ENCODE measurements at regions of chr13 and their contacts with region 1.

Region 1: DNA sequence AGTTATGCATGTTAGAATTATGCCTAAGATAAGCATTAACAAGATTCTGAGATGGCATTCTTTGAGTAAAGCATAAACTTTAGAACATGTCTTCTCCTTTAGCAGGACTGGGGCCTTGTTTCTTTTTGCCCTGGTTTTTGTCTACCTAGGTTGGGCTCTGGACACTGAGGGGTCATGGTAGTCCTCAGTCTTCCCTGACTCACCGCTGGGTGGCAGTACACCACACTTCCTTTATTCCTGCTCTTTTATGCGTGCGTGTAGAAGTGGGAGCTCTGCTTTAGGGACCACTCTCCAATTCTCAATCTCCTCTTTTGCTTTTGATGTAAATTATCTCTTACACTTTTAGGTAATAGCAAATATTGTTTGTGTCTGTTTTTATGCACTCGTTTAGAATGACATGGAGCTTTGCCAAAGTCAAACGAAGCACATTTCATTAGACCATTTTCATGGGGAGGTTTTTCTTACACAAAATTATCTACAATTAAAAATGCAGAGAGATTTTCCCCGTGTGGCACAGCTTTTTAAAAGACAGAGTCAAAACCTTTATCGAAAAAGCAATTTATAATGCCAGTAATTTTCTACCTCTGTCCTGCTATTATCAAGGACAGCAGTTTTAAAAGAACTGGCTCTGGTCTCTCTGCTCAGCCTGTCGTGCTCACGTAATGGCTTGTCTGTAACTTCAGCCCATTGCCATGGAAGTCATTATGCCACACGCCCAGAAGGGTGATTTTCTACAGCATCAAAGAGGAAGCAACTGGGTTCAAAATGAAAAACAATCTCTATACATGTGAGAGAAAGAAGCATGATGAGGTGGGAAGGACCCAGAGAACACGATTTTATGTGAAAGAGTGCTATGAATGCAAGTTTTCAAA is 413.9 kb downstream of the COG6 start:
- DNase-seq: no peak
- ATAC-seq: peak; percentile 92
- H3K4me3 ChIP-seq: no peak overlapping the region
- H3K27ac ChIP-seq: no peak overlapping the region
- H3K4me1 ChIP-seq: no peaks in the 10 kb centered on the region
- H3K27me3 ChIP-seq: peaks cover 0 to 8% of the 10 kb centered on the region in 2 experiments; a peak in 1 of 4 replicates
- CTCF ChIP-seq: peak; percentile 76 to 81 (median 79)
- EP300 ChIP-seq: no peak
- POLR2A ChIP-seq: no peak
- RAD21 ChIP-seq: peak; percentile 82

Region 2: GRCh38 chr13:38862443-38862842 is 1207.0 kb before region 1 on chr13:
- CTCF ChIA-PET with region 1: no interaction called
- POLR2A ChIA-PET with region 1: no interaction called
- RAD21 ChIA-PET with region 1: no interaction called
- SMC1A ChIA-PET with region 1: no interaction called
- in situ Hi-C with region 1: no loop called
- intact Hi-C with region 1: no loop called
- DNase-seq: no peak
- ATAC-seq: peak; percentile 78
- H3K4me3 ChIP-seq: no peak overlapping the region
- H3K27ac ChIP-seq: no peak overlapping the region
- H3K4me1 ChIP-seq: no peaks in the 10 kb centered on the region
- H3K27me3 ChIP-seq: no peaks in the 10 kb centered on the region; a peak in 1 of 4 replicates
- CTCF ChIP-seq: no peak
- EP300 ChIP-seq: no peak
- POLR2A ChIP-seq: no peak
- RAD21 ChIP-seq: no peak

Region 3: DNA sequence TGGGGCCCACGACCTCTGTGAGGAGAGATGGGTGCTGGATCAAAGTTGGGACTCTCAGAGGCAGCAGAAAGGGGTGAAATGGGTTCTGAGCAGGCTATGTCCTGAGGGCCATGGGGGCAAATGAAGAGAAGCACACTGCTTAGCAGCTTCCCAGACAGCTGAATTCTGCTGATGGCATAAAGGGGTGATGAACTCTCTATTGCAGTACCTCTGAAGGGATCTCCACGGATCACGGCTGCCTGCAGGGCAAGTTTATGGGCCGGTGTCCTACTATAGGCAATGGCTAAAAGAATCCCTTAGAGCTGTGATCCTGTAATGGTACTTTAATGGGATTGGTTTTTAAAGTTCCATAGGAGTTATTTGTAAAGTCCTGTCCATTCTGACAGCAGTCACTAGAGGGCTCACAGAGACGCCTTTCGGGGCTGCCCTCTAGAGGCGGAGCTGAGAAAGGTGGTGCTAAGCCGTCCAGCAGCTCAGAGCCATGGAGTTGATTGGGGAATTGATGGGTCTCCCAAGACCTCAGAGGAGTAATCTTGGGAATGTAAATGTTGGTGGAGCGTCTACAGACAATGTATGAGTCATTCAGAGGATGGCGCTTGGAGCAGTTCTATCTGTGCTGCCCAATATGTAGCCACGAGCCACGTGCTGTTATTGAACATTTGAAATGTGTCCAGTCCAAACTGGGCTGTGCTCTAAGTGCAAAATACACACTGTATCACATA is 126.7 kb before region 1 on chr13:
- CTCF ChIA-PET with region 1: interaction called, 20 read pairs
- POLR2A ChIA-PET with region 1: no interaction called
- RAD21 ChIA-PET with region 1: interaction called, 4 read pairs
- SMC1A ChIA-PET with region 1: interaction called, 12 read pairs
- in situ Hi-C with region 1: no loop called
- intact Hi-C with region 1: no loop called
- DNase-seq: peak; percentile 50
- ATAC-seq: peak; percentile 100
- H3K4me3 ChIP-seq: no peak overlapping the region
- H3K27ac ChIP-seq: no peak overlapping the region
- H3K4me1 ChIP-seq: no peaks in the 10 kb centered on the region
- H3K27me3 ChIP-seq: no peaks in the 10 kb centered on the region; a peak in 2 of 4 replicates
- CTCF ChIP-seq: peak; percentile 100; a peak in 5 of 6 replicates
- EP300 ChIP-seq: no peak
- POLR2A ChIP-seq: no peak
- RAD21 ChIP-seq: peak; percentile 95

Region 4: DNA sequence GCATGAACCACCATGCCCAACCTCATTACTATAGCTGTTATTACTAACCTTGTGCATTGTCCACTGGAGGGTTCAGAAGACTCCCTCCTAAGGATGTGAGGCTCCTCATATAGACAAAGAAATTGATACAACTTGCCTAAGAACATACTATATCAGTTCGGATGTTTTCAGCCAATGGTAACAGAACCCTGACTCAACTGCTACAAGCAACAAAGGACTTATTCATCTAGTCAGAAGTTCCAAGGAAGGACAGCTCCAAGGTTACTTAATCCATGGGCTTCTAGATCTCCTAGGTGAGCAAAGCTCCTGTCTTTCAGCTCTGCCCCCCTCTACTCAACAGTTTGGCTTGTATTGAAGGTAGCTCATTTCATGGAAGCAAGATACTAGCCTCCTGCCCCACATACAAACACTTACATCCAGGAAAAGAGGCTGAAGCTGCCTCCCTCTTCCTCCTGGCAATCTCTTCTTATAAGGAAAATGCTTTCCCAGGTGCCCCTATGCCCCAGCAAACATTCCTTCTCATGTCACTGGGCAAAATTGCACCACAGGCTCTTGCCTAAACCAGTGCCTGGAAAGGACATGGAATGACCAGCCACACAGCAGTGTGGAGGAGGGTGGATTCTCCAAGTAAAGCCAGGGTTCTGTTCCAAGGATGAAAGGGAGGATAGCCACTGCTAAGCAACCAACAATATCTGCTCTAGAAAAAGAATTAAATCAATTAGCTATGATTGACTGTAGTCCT is 99.2 kb after region 1 on chr13:
- CTCF ChIA-PET with region 1: interaction called, 3 read pairs
- POLR2A ChIA-PET with region 1: no interaction called
- RAD21 ChIA-PET with region 1: no interaction called
- SMC1A ChIA-PET with region 1: interaction called, 12 read pairs
- in situ Hi-C with region 1: no loop called
- intact Hi-C with region 1: no loop called
- DNase-seq: no peak
- ATAC-seq: no peak
- H3K4me3 ChIP-seq: no peak overlapping the region
- H3K27ac ChIP-seq: no peak overlapping the region
- H3K4me1 ChIP-seq: no peaks in the 10 kb centered on the region
- H3K27me3 ChIP-seq: peaks cover 2 to 10% of the 10 kb centered on the region in 2 experiments; a peak in 3 of 4 replicates
- CTCF ChIP-seq: no peak
- EP300 ChIP-seq: no peak
- POLR2A ChIP-seq: no peak
- RAD21 ChIP-seq: no peak

Region 5: DNA sequence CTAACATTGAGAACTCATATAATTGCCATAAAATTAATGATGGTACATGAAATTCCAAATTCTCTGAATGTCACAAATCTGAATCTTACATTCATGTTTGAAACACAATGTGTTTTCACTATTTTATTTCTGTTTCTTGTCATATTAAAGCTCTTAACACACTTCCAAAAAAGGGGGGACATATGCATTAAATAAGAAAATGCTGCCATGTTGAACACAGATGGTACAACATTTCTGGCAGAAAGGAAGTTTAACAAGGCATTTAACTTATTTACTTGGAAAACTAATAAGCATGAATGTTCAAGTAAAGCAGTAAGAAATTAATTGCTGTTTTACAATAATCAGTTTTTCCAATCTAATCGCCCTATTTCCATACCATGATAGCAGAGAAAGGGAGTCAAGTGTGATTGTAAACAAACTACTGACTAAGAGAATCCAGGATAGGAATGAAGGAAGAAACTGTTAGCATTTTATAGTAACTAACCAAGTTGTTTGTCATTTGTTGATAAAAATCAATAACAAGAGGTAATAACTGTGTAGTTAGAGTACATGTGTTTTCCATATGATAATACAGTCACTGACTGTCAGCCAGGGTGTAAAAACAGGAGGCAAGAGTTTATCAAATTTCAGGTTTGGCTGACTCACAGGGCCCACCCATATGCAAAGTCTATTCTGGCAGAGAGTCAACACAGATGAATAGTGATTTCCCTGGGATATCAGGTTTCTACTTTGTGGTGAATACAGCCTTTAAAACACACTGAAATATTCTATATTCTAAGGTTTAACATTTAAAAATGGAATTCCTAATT is 602.8 kb after region 1 on chr13:
- CTCF ChIA-PET with region 1: interaction called, 7 read pairs
- POLR2A ChIA-PET with region 1: no interaction called
- RAD21 ChIA-PET with region 1: interaction called, 12 read pairs
- SMC1A ChIA-PET with region 1: interaction called, 14 read pairs
- in situ Hi-C with region 1: no loop called
- intact Hi-C with region 1: no loop called
- DNase-seq: no peak
- ATAC-seq: no peak
- H3K4me3 ChIP-seq: no peak overlapping the region
- H3K27ac ChIP-seq: no peak overlapping the region
- H3K4me1 ChIP-seq: peaks cover 6% of the 10 kb centered on the region
- H3K27me3 ChIP-seq: no peaks in the 10 kb centered on the region
- CTCF ChIP-seq: no peak
- EP300 ChIP-seq: no peak
- POLR2A ChIP-seq: no peak
- RAD21 ChIP-seq: no peak

Region 6: DNA sequence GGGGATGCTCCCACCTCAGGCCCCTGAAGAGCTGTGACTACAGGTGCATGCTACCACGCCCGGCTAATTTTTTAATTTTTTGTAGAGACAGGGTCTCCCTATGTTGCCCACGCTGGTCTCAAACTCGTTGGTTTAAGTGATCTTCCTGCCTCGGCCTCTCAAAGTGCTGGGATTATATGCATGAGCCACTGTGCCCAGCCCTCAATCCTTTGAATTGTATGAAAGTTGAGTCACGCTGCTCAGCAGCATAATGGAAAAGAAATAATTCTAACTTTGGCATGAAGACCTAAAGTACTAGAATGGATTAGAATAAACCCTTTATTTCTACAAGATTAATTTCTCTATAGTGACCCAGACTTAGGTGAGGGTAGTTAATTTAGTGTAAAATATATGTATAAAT is 659.2 kb after region 1 on chr13:
- CTCF ChIA-PET with region 1: no interaction called
- POLR2A ChIA-PET with region 1: no interaction called
- RAD21 ChIA-PET with region 1: no interaction called
- SMC1A ChIA-PET with region 1: no interaction called
- in situ Hi-C with region 1: no loop called
- intact Hi-C with region 1: no loop called
- DNase-seq: no peak
- ATAC-seq: no peak
- H3K4me3 ChIP-seq: no peak overlapping the region
- H3K27ac ChIP-seq: no peak overlapping the region
- H3K4me1 ChIP-seq: no peaks in the 10 kb centered on the region
- H3K27me3 ChIP-seq: no peaks in the 10 kb centered on the region
- CTCF ChIP-seq: no peak
- EP300 ChIP-seq: no peak
- POLR2A ChIP-seq: no peak
- RAD21 ChIP-seq: no peak